Activated CD4-positive, alpha-beta T cell treated with anti-CD3 and anti-CD28 coated beads, Interleukin-2, amount 10 ng/mL, durations not matched to agents 24 days and 14 days (primary cell): ENCODE measurements at regions of chr14 and their contacts with region 1.

Region 1: DNA sequence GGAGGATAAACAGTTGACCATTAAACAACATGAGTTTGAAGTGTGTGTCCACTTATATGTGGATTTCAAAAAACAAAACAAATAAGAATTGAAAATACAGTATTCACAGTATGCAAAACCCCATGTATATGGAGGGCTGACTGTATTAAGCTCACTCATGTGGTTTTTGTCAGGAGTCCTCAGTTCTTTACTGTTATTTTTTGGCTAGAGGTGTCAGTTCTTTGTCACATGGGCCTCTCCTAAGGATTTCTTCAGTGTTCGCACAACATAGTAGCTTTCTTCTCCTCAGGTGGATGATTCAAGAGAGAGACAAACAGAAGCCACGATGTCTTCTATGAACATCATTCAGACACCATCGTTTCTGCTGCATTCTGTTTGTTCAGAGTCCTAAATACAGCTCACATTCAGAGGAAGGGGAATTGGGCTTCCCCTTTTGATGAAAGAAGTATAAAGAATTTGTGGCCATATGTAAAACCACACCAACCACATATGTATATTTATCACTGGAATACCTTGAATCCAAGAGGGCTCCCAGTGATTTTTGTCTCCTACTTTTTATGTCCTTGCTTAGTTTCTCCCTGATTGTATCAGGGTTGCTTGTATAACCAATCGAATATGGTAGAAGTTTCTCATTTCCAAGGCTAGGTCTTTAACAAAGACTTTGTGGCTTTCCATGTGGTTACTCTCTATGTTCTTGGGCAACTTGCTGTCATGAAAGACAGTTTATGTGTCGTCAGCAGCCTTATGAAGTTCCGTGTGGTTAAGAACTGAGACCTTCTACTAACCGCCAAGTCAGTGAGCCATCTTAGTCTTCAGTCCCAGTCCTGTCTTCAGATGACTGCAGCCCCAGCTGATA is 18.9 kb downstream of the MNAT1 start:
- DNase-seq: peak; percentile 92
- H3K4me3 Mint-ChIP-seq: peak overlapping the region; percentile 69
- H3K27ac Mint-ChIP-seq: peak overlapping the region; percentile 90
- H3K4me1 Mint-ChIP-seq: peaks cover 49% of the 10 kb centered on the region
- H3K27me3 Mint-ChIP-seq: peaks cover 3% of the 10 kb centered on the region

Region 2: DNA sequence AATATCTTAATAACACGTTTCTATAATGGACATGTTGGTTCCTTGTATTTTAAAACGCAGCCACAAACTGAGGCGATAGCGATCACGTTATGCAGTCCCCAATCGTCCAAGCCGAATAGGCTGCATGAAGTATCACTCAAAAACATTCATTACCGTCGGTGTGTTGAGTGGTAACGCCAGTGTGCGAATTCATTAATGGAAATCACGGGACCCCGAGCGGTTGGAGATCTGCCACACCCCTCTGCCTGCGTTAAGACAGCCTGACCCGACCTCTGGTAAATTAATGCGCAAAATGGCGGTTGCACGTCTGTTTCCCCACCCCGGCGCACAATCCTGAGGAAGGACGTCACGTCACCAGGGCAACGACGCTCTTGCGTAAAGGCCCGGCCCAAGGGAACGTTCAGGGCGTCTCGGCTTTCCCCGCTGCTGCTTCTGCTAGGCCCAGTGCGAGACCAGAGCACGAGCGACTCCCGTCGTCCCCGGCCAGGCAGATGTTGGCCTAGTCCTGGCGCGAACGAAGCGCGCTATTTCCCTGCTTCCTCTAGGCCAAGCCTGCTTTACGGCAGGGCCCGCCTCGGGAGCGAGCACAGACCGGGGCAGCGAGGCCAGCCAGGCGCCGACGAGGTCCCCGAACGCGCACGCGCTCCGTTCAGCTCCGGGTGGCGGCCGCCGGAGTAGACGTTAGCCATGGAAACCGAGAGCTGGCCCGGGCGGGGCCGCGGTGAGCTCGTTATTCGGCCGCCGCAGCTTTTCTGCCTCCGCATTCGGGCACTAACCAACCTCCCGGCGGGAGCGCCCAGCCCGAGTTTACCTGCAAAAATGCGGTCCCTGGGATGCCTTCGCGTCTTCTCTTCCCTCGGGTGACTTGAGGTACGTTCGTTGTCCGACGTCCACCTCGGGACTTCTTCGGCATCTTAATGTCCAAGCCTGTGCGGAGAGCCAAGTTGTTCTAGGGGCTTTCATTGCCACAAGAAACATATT is 661.7 kb before region 1 on chr14 and contains the start of gene PCNX4:
- intact Hi-C with region 1: loop called (anchors 10 kb)
- DNase-seq: peak; percentile 97
- H3K4me3 Mint-ChIP-seq: peak within 1 kb of the TSS; percentile 98
- H3K27ac Mint-ChIP-seq: peak within 1 kb of the TSS; percentile 98
- H3K4me1 Mint-ChIP-seq: peaks cover 35% of the 10 kb centered on the region
- H3K27me3 Mint-ChIP-seq: no peaks in the 10 kb centered on the region
- total RNA-seq, gene PCNX4: 39.8 and 45.5 TPM in 2 replicates

Region 3: GRCh38 chr14:60713513-60713912 is 40.0 kb before region 1 on chr14:
- intact Hi-C with region 1: no loop called
- DNase-seq: no peak
- H3K4me3 Mint-ChIP-seq: no peak overlapping the region
- H3K27ac Mint-ChIP-seq: no peak overlapping the region
- H3K4me1 Mint-ChIP-seq: no peaks in the 10 kb centered on the region
- H3K27me3 Mint-ChIP-seq: peaks cover 48% of the 10 kb centered on the region

Region 4: GRCh38 chr14:60724137-60724619 is 29.3 kb before region 1 on chr14 and contains the start of gene SIX4:
- intact Hi-C with region 1: loop called (anchors 2 kb)
- DNase-seq: peak; percentile 63
- H3K4me3 Mint-ChIP-seq: peak within 1 kb of the TSS; percentile 90
- H3K27ac Mint-ChIP-seq: peak within 1 kb of the TSS; percentile 60
- H3K4me1 Mint-ChIP-seq: peaks cover 24% of the 10 kb centered on the region
- H3K27me3 Mint-ChIP-seq: peaks cover 77% of the 10 kb centered on the region
- total RNA-seq, gene SIX4: 0.23 and 0.52 TPM in 2 replicates

Region 5: DNA sequence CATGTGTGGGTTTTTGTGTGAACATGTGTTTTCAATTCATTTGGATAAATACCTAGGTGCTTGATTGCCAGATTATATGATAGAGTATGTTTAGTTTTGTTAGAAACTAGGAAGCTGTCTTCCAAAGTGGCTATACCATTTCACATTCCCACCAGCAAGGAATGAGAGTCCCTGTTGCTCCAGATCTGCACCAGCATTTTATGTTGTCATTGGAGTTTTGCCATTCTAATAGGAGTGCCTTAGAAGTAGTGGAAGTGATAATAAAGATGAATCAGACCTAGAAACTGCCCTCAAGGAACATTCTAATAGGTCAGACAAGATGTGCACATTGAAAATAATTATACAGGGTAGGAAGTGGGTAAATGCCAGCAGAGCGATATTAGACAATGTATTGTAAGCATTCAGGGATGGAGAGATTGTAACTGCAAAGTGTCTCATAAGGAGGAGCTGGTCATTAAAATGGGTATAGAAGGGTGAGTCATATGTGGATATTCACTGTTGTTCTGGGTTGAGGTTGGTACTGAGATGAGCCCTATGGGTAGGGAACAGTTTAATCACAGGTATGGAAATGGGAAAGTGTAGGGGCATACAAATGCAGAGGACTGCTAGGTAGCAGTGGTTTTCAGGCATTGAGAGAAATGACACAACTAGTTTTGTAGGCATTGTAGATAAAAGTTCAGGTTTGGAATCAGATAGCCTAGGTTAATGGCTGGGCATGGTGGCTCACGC is 52.5 kb after region 1 on chr14:
- intact Hi-C with region 1: no loop called
- DNase-seq: no peak
- H3K4me3 Mint-ChIP-seq: no peak overlapping the region
- H3K27ac Mint-ChIP-seq: no peak overlapping the region
- H3K4me1 Mint-ChIP-seq: peaks cover 4% of the 10 kb centered on the region
- H3K27me3 Mint-ChIP-seq: no peaks in the 10 kb centered on the region

Region 6: DNA sequence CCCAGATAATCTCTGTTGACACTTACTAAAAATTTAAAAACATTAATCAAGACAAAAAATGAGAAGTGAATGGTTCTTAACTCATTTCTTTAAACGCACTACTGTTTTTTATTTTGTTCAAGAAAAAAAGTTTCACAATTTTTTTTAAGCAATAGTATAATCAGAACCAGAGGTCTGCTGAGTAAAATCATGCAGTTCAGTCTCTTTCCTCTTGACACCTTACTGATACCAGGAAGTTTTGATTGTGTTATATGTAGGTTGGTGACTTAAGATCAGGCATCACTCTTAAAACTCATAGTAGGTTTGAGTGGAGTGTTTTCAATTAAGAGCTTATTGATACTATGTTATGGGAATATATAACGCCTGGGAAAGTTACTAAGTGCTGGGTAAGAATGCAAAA is 106.0 kb after region 1 on chr14:
- intact Hi-C with region 1: loop called (anchors 2 kb)
- DNase-seq: no peak
- H3K4me3 Mint-ChIP-seq: no peak overlapping the region
- H3K27ac Mint-ChIP-seq: no peak overlapping the region
- H3K4me1 Mint-ChIP-seq: peaks cover 8% of the 10 kb centered on the region
- H3K27me3 Mint-ChIP-seq: peaks cover 5% of the 10 kb centered on the region

Region 7: DNA sequence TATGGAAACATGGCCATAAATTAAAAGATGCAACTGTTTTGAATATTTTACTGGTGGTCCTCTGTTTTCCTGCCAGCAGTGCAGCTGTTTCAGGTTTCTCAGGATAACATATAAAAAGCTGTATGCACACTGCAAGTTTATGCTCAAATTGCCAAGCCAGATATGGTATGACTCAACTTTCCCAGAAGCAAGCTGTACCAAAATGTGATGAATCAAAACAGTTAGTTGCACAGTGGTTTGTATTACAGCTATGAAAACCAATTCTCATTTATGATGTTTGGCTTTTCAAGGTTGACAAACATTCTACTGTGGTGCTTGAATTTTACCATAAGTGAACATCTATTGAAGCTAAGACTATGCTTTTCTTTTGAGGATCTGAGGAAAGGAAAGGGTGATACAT is 211.9 kb after region 1 on chr14:
- intact Hi-C with region 1: loop called (anchors 1 kb)
- DNase-seq: no peak
- H3K4me3 Mint-ChIP-seq: no peak overlapping the region
- H3K27ac Mint-ChIP-seq: peak overlapping the region; percentile 52
- H3K4me1 Mint-ChIP-seq: peaks cover 6% of the 10 kb centered on the region
- H3K27me3 Mint-ChIP-seq: no peaks in the 10 kb centered on the region

Region 8: DNA sequence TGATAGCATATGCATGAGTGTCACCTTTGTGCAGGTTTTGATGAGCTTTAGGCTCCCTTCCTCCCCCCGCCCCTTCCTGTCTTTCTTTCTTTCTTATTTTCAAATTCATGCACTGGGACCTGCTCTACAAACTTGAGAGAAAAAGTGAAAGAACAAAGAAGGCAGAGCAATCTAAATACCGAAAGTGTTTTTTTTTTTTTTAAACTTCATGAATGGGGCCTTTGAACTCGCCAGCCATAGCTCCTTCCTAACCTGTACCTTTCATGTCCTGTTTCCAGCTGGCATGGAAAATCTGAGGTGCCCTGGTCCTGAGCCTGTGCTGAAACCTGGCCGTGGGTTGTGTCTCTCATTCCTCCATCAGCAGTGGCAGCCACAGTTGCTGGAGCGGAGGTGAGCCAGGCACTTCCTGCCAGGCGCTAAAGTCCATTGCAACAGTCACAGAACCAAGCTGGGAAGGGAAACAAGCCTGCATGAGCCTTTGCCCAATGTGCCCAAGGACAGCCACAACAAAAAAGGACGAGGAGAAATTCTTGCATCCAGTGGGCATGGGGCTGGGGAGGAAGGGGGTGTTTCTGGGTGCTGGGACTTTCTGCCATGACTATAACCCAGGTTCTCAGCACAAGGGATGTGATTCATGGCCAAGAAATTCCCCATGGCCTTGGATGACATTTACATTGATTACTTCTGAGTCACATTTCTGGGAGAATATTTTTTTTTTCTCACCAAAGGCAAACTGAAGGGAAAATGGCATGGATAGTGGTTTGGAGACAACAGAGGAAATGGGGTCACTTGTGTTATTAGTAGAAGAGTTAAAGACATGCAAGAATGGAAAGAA is 425.0 kb after region 1 on chr14:
- intact Hi-C with region 1: loop called (anchors 1 kb)
- DNase-seq: peak; percentile 80
- H3K4me3 Mint-ChIP-seq: peak overlapping the region; percentile 72
- H3K27ac Mint-ChIP-seq: peak overlapping the region; percentile 87
- H3K4me1 Mint-ChIP-seq: peaks cover 42% of the 10 kb centered on the region
- H3K27me3 Mint-ChIP-seq: no peaks in the 10 kb centered on the region

Region 9: GRCh38 chr14:61662437-61663311 is 909.2 kb after region 1 on chr14:
- intact Hi-C with region 1: loop called (anchors 5 kb)
- DNase-seq: peak; percentile 90
- H3K4me3 Mint-ChIP-seq: peak overlapping the region; percentile 70
- H3K27ac Mint-ChIP-seq: peak overlapping the region; percentile 95
- H3K4me1 Mint-ChIP-seq: peaks cover 66% of the 10 kb centered on the region
- H3K27me3 Mint-ChIP-seq: no peaks in the 10 kb centered on the region